T-cell (primary cell): ENCODE measurements at regions of chr10 and their contacts with region 1.

Region 1: DNA sequence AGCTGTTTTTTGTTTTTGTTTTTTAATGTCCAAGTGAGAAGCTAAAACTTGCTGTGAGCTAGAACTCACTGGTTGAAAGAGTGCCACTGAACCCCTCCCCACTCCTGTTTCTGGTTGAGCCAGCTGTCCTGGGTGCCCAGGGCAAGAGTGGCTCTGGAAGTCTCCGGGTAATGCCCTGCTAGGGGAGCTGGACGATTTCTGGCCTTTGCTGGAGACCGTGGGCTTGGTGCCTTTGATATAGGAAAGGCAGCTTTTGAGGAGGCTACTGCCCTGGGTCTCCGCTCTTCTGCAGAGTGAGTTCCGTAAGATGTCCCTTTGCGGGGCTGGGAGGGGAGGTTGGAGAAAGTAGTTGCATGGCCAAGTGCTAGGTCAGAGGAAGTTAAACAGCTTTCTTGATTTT is 14.6 kb downstream of the ZFYVE27 start:
- DNase-seq: no peak
- ATAC-seq: no peak
- H3K4me3 ChIP-seq: no peak overlapping the region
- H3K4me3 Mint-ChIP-seq: no peak overlapping the region
- H3K27ac ChIP-seq: no peak overlapping the region
- H3K27ac Mint-ChIP-seq: no peak overlapping the region
- H3K4me1 ChIP-seq: no peaks in the 10 kb centered on the region
- H3K4me1 Mint-ChIP-seq: peaks cover 0 to 2% (median 0%) of the 10 kb centered on the region in 3 donors
- H3K27me3 ChIP-seq: no peaks in the 10 kb centered on the region
- H3K27me3 Mint-ChIP-seq: no peaks in the 10 kb centered on the region

Region 2: GRCh38 chr10:97827778-97828291 is 76.3 kb after region 1 on chr10:
- CTCF ChIA-PET with region 1: no interaction called
- POLR2A ChIA-PET with region 1: interaction called in 1 of 2 experiments, 13 read pairs
- DNase-seq: no peak
- ATAC-seq: no peak
- H3K4me3 ChIP-seq: no peak overlapping the region
- H3K4me3 Mint-ChIP-seq: no peak overlapping the region
- H3K27ac ChIP-seq: no peak overlapping the region
- H3K27ac Mint-ChIP-seq: peak overlapping the region in 1 of 2 donors; percentile 80
- H3K4me1 ChIP-seq: peaks cover 4 to 25% of the 10 kb centered on the region in 2 experiments
- H3K4me1 Mint-ChIP-seq: peaks cover 21 to 42% (median 34%) of the 10 kb centered on the region in 3 donors
- H3K27me3 ChIP-seq: peaks cover 0 to 8% of the 10 kb centered on the region in 2 experiments
- H3K27me3 Mint-ChIP-seq: no peaks in the 10 kb centered on the region